Dorsolateral prefrontal cortex (tissue), 120 donors: ENCODE measurements at regions of chr20 and their contacts with region 1.

Region 1: GRCh38 chr20:3846740-3847428 is at the start of gene MAVS:
- DNase-seq: peak; percentile 76 to 95 (median 86)
- H3K4me3 ChIP-seq: peak within 1 kb of the TSS; percentile 52 to 100 (median 98)
- H3K27ac ChIP-seq: peak within 1 kb of the TSS; percentile 42 to 97 (median 92)
- H3K27me3 ChIP-seq: no peaks in the 10 kb centered on the region
- CTCF ChIP-seq: peak in 27 of 56 donors; percentile 4 to 45 (median 17)
- total RNA-seq, gene MAVS: 17.4 to 50.9 (median 25.6) TPM

Region 2: GRCh38 chr20:3011752-3012151 is 835.1 kb before region 1 on chr20:
- intact Hi-C with region 1: no loop called
- DNase-seq: no peak
- H3K4me3 ChIP-seq: no peak overlapping the region
- H3K27ac ChIP-seq: peak overlapping the region in 18 of 59 donors; percentile 1 to 62 (median 16)
- H3K27me3 ChIP-seq: no peaks in the 10 kb centered on the region
- CTCF ChIP-seq: no peak

Region 3: GRCh38 chr20:3820048-3820900 is 26.6 kb before region 1 on chr20 and contains the start of gene AP5S1:
- intact Hi-C with region 1: loop called in 1 of 2 experiments (anchors 2 kb)
- DNase-seq: peak; percentile 95 to 98 (median 97)
- H3K4me3 ChIP-seq: peak within 1 kb of the TSS; percentile 47 to 96 (median 80)
- H3K27ac ChIP-seq: peak within 1 kb of the TSS; percentile 94 to 100 (median 100)
- H3K27me3 ChIP-seq: no peaks in the 10 kb centered on the region
- CTCF ChIP-seq: peak in 55 of 56 donors; percentile 86 to 100 (median 99)
- total RNA-seq, gene AP5S1: 9.8 to 22.0 (median 15.9) TPM